Right ventricle myocardium inferior (tissue), 1 donor: ENCODE measurements at regions of chr6 and their contacts with region 1.

Region 1: DNA sequence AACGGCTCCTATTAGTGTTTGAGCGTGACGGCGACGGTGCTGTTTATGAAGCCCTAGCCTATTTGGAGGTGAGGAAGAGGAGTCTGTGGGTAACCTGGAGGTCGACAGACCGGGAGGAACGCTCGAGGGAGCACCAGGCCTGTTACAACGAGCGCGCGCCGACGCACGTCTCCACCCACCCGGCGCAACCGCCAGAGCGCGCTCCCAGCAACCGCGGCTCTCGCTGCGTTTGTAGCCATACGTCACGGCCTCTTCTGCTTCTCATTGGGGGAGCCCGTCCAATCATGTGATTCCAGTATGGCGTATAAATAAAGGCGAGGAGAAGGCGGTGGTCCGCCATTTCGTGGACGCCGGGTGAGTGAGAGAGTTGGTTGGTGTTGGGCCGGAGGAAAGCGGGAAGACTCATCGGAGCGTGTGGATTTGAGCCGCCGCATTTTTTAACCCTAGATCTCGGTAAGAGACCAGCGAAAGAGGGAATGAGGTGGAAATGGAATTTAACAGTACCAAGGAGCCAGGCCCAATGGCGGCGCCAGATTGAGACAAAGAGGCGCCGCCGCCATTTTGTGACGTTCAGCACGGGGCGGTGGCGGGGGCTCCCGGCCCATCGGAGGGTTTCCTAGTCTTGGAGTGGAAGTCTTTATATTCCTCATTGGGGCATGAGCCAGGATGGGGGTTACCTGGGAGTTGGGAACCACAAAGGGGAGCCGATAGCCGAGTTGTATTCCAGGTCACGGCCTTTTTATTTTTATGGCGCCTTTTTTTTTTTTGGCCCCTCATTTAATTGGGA is at the start of gene SRSF3:
- DNase-seq: peak; percentile 97
- ATAC-seq: peak; percentile 98
- total RNA-seq, gene SRSF3: 119 TPM

Region 2: DNA sequence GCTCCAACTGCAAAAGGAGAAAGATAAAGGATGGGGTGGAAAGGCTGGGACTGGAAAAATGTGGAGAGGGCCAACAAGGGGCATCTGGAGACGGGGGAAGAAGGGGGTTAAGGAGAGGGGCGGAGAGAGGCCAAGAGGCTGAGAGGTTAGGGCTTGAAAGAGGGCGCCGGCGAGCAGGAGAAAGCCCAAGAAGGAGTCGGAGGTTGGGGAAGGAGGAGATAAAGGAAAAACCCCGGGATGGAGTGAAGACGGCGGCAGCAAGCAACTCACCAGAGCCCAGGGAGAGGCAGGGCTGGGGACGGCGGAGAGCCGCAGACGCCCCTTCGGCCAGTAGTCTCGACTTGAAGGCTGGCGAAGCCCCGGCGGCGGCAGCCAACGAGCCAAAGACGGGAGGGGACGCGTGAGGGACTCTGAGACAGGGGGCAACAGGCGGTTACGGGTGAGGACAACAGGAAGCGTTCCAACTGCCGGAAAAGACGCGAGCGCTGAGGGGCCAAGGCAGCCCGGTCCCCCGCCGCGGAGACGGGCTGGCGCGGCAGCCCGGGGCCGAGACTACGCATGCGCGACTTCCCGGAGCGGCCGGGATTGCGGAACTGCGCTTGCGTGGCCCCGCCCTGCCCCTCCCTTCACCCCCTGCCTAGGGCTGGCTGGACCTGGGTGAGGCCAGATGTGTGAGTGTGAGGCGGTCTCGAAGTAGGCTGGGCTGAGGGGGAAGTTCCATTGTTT is 47.1 kb before region 1 on chr6 and contains the start of gene STK38:
- intact Hi-C with region 1: loop called (anchors 1 kb)
- DNase-seq: peak; percentile 94
- ATAC-seq: peak; percentile 98
- total RNA-seq, gene STK38: 22.6 TPM

Region 3: DNA sequence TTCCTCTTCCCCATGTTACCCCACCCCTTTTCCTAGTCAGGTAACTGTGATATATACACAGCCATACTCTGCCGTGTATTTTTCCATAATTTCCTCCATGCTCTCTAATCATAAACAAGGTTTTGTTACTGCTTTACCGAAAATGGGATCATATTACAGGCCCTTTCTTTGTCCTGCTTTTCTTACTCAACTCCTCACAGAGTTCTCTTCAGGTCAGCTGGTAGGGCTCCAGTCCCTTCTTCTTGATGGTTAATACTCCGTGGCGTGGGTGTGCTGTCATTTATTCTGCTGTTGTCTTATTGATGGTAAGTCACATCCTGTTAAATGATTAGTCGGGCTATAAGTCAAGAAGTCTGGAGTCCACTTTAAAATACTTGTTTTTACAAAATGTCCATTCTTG is 335.4 kb after region 1 on chr6:
- intact Hi-C with region 1: no loop called
- DNase-seq: no peak
- ATAC-seq: peak; percentile 32